ENCODE measurements at regions of chr10 and their contacts with region 1.

Region 1: GRCh38 chr10:131532745-131533341 is 221.3 kb upstream of the TCERG1L start:
- H3K4me3 Mint-ChIP-seq: no peak overlapping the region
- H3K27ac Mint-ChIP-seq: no peak overlapping the region
- H3K4me1 Mint-ChIP-seq: no peaks in the 10 kb centered on the region
- H3K27me3 Mint-ChIP-seq: no peaks in the 10 kb centered on the region

Region 2: GRCh38 chr10:131461093-131461492 is 71.8 kb before region 1 on chr10:
- intact Hi-C with region 1: no loop called
- H3K4me3 Mint-ChIP-seq: no peak overlapping the region
- H3K27ac Mint-ChIP-seq: no peak overlapping the region
- H3K4me1 Mint-ChIP-seq: no peaks in the 10 kb centered on the region
- H3K27me3 Mint-ChIP-seq: peaks cover 2% of the 10 kb centered on the region

Region 3: GRCh38 chr10:131571865-131572264 is 39.0 kb after region 1 on chr10:
- intact Hi-C with region 1: loop called (anchors 1 kb)
- H3K4me3 Mint-ChIP-seq: no peak overlapping the region
- H3K27ac Mint-ChIP-seq: no peak overlapping the region
- H3K4me1 Mint-ChIP-seq: no peaks in the 10 kb centered on the region
- H3K27me3 Mint-ChIP-seq: no peaks in the 10 kb centered on the region